ENCODE measurements at regions of chr5 and their contacts with region 1.

Region 1: GRCh38 chr5:64784451-64785025 is 15.8 kb downstream of the CWC27 start:
- DNase-seq: peak; percentile 67
- H3K4me3 ChIP-seq: no peak overlapping the region
- H3K27ac ChIP-seq: no peak overlapping the region
- H3K27me3 ChIP-seq: no peaks in the 10 kb centered on the region
- CTCF ChIP-seq: peak; percentile 78

Region 2: GRCh38 chr5:64229163-64229774 is 555.3 kb before region 1 on chr5:
- CTCF ChIA-PET with region 1: interaction called, 11 read pairs
- POLR2A ChIA-PET with region 1: no interaction called
- DNase-seq: no peak
- H3K4me3 ChIP-seq: no peak overlapping the region
- H3K27ac ChIP-seq: no peak overlapping the region
- H3K27me3 ChIP-seq: no peaks in the 10 kb centered on the region
- CTCF ChIP-seq: peak; percentile 67

Region 3: GRCh38 chr5:64634997-64635686 is 149.4 kb before region 1 on chr5:
- CTCF ChIA-PET with region 1: interaction called, 148 read pairs
- POLR2A ChIA-PET with region 1: no interaction called
- DNase-seq: peak; percentile 15
- H3K4me3 ChIP-seq: no peak overlapping the region
- H3K27ac ChIP-seq: no peak overlapping the region
- H3K27me3 ChIP-seq: no peaks in the 10 kb centered on the region
- CTCF ChIP-seq: peak; percentile 66

Region 4: DNA sequence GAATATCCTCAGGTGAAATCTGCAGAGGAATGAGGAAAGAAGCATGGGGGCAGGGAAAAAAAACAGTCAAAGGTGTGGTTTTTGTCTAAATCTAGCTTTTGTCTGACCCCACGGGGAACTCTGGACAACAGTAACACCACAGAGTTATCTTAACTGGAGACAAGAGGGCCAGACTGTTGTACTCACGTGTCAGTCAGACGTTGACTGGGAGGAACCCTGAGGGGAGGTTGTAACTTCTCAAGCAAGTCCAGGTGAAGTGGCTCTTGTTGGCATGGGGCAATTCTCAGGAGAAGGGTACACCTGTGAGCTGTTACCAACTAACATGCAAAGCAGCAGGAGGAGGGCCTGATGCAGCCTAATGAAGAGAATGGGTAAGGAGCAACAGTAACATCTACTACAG is 138.4 kb before region 1 on chr5:
- CTCF ChIA-PET with region 1: interaction called, 20 read pairs
- POLR2A ChIA-PET with region 1: no interaction called
- DNase-seq: no peak
- H3K4me3 ChIP-seq: no peak overlapping the region
- H3K27ac ChIP-seq: no peak overlapping the region
- H3K27me3 ChIP-seq: no peaks in the 10 kb centered on the region
- CTCF ChIP-seq: no peak

Region 5: GRCh38 chr5:64768358-64769312 is 15.9 kb before region 1 on chr5 and contains the starts of genes CWC27 and SREK1IP1:
- CTCF ChIA-PET with region 1: interaction called, 84 read pairs
- POLR2A ChIA-PET with region 1: no interaction called
- DNase-seq: peak; percentile 77
- H3K4me3 ChIP-seq: peak within 1 kb of the TSS; percentile 96
- H3K27ac ChIP-seq: peak within 1 kb of the TSS; percentile 89
- H3K27me3 ChIP-seq: no peaks in the 10 kb centered on the region
- CTCF ChIP-seq: peak; percentile 41
- polyA plus RNA-seq, gene CWC27: 23.2 and 39.5 TPM in 2 replicates
- polyA plus RNA-seq, gene SREK1IP1: 3.7 and 3.8 TPM in 2 replicates

Region 6: DNA sequence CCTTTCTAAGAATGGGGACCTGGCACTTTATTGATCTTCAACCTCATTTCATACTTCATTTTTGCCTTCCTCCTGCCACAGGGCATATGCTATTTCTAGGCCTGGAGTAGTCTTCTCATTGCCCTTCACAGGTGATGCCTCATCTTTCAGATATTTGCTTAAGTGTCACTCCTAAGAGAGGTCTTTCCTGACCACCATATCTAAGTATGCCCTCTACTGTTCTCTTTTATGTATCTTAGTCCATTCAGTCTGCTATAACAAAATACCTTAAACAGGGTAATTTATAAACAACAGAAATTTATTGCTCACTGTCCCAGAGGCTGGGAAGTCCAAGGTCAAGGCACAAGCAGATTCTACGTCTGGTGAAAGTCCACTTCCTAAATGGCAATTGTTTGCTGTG is 598.0 kb after region 1 on chr5:
- CTCF ChIA-PET with region 1: interaction called, 16 read pairs
- POLR2A ChIA-PET with region 1: no interaction called
- DNase-seq: no peak
- H3K4me3 ChIP-seq: no peak overlapping the region
- H3K27ac ChIP-seq: no peak overlapping the region
- H3K27me3 ChIP-seq: no peaks in the 10 kb centered on the region
- CTCF ChIP-seq: no peak